Activated CD4-positive, alpha-beta T cell treated with anti-CD3 and anti-CD28 coated beads for 36 hours (primary cell): ENCODE measurements at regions of chr4 and their contacts with region 1.

Region 1: GRCh38 chr4:184474263-184475095 is at the start of gene IRF2:
- DNase-seq: peak; percentile 99
- ATAC-seq: peak; percentile 76
- H3K4me3 Mint-ChIP-seq: peak within 1 kb of the TSS; percentile 88
- H3K27ac Mint-ChIP-seq: peak within 1 kb of the TSS; percentile 94
- H3K4me1 Mint-ChIP-seq: peaks cover 59% of the 10 kb centered on the region
- H3K27me3 Mint-ChIP-seq: no peaks in the 10 kb centered on the region
- total RNA-seq, gene IRF2: 50.1 to 68.9 TPM

Region 2: DNA sequence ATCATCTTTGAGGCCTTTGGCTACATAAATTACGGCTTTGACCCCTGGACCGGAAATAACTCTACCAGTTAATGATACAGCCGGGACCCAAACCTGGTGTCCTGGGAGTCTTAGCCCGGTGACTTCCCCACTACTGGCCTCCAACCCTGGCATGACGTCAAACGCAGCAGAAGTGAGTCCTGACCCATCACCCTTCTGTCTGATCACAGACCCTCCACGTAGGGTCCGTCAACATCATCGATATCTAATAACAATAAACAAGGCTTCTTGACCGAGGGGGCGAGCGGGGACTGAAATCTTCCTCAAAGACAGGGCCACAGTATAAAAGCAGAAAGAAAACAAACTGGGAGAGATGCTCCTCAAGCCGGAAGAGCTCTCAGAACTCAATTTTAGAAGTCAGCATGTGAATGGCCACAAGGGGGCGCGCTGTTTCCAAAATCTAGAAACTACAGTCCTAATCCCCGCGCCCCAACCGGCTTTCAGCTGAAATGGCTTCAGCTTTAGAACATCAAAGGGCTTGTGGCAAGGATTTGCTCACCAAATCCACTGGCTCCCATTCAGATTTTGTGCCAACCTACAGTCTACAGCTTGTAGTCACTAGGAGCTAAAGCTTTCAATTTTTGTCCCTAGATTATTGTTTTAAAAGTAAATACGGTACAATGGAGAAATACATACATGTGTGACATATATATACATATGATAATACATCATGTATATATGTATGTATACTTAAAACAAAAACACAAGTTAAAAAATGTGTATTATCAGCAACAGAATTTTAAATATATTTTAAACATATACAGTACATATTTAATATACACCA is 210.4 kb before region 1 on chr4:
- CTCF ChIA-PET with region 1: interaction called, 4 read pairs
- POLR2A ChIA-PET with region 1: interaction called, 12 read pairs
- intact Hi-C with region 1: loop called (anchors 1 kb)
- DNase-seq: peak; percentile 98
- ATAC-seq: peak; percentile 57
- H3K4me3 Mint-ChIP-seq: peak overlapping the region; percentile 2
- H3K27ac Mint-ChIP-seq: peak overlapping the region; percentile 41
- H3K4me1 Mint-ChIP-seq: peaks cover 47% of the 10 kb centered on the region
- H3K27me3 Mint-ChIP-seq: no peaks in the 10 kb centered on the region

Region 3: GRCh38 chr4:184318852-184319251 is 155.6 kb before region 1 on chr4:
- CTCF ChIA-PET with region 1: no interaction called
- POLR2A ChIA-PET with region 1: no interaction called
- intact Hi-C with region 1: loop called (anchors 1 to 5 kb)
- DNase-seq: no peak
- ATAC-seq: peak; percentile 8
- H3K4me3 Mint-ChIP-seq: no peak overlapping the region
- H3K27ac Mint-ChIP-seq: peak overlapping the region; percentile 59
- H3K4me1 Mint-ChIP-seq: peaks cover 35% of the 10 kb centered on the region
- H3K27me3 Mint-ChIP-seq: peaks cover 3% of the 10 kb centered on the region

Region 4: DNA sequence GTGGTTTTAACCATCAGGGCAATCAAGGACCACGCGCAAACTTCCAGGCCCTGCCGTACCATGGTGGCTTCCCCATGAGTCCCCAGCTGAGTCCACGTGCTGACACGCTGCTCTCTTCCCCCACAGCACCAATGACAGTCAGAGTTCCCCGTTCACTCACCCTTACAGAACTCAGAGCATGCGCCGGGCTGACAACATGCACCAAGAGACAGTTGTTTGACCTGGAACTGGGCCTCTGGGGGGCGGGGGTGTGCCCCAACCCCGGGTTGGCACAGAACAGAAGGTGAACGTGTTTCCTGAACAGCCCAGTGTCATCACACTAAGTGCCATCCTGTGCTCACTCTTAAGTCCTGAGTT is 29.5 kb before region 1 on chr4:
- CTCF ChIA-PET with region 1: no interaction called
- POLR2A ChIA-PET with region 1: no interaction called
- intact Hi-C with region 1: no loop called
- DNase-seq: peak; percentile 67
- ATAC-seq: peak; percentile 82
- H3K4me3 Mint-ChIP-seq: no peak overlapping the region
- H3K27ac Mint-ChIP-seq: peak overlapping the region; percentile 48
- H3K4me1 Mint-ChIP-seq: peaks cover 90% of the 10 kb centered on the region
- H3K27me3 Mint-ChIP-seq: no peaks in the 10 kb centered on the region

Region 5: DNA sequence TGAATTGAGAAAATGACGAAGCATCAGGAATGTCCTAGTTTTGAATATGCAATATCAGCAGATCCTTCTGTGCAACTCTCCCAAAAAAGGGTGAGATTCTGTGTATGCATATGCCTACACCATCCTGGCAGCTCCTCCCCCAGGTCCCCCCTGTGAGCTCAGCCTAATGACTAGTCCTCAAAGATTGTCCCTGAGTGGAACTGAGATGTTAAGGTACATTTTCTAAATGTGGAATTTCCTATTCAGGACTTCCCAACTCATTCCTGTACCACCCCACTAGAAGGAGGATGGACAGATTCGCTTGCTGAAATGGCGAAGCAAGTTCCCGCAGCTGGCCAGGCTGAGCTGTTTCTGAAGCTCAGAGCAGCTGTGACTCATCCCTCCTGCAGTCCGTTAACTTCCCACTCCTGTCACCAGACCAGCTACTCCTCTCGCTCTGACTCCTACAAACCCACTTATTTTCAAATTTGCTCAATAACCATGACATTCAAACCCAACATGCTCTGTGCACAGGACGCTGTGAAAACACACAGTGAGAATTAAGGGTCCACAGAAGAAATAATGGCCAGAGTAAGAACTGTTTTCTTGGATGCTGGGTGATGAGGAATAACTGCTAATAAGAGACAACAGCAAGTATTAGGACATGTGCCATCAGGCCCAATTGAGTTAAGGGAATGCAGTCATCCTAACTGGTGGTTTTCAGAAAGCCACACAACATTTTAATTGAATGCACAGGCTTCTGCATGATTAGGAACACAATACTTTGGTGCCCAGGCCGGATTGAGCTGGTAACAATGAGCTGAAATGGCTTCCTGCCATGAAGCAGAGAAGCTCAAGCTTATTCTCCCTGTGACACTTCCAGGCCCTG is 39.9 kb after region 1 on chr4:
- CTCF ChIA-PET with region 1: interaction called, 11 read pairs
- POLR2A ChIA-PET with region 1: interaction called, 20 read pairs
- intact Hi-C with region 1: loop called (anchors 1 kb)
- DNase-seq: peak; percentile 89
- ATAC-seq: peak; percentile 91
- H3K4me3 Mint-ChIP-seq: peak overlapping the region; percentile 51
- H3K27ac Mint-ChIP-seq: peak overlapping the region; percentile 90
- H3K4me1 Mint-ChIP-seq: peaks cover 43% of the 10 kb centered on the region
- H3K27me3 Mint-ChIP-seq: peaks cover 1% of the 10 kb centered on the region

Region 6: GRCh38 chr4:184649026-184649970 is 174.8 kb after region 1 on chr4 and contains the starts of genes CASP3 and PRIMPOL:
- CTCF ChIA-PET with region 1: no interaction called
- POLR2A ChIA-PET with region 1: interaction called, 3 read pairs
- intact Hi-C with region 1: loop called (anchors 1 kb)
- DNase-seq: peak; percentile 98
- ATAC-seq: peak; percentile 88
- H3K4me3 Mint-ChIP-seq: peak within 1 kb of the TSS; percentile 94
- H3K27ac Mint-ChIP-seq: peak within 1 kb of the TSS; percentile 95
- H3K4me1 Mint-ChIP-seq: peaks cover 51% of the 10 kb centered on the region
- H3K27me3 Mint-ChIP-seq: no peaks in the 10 kb centered on the region
- total RNA-seq, gene CASP3: 44.3 to 65.7 TPM
- total RNA-seq, gene PRIMPOL: 20.4 to 24.3 TPM